Breast epithelium (tissue), 4 donors: ENCODE measurements at regions of chr5 and their contacts with region 1.

Region 1: DNA sequence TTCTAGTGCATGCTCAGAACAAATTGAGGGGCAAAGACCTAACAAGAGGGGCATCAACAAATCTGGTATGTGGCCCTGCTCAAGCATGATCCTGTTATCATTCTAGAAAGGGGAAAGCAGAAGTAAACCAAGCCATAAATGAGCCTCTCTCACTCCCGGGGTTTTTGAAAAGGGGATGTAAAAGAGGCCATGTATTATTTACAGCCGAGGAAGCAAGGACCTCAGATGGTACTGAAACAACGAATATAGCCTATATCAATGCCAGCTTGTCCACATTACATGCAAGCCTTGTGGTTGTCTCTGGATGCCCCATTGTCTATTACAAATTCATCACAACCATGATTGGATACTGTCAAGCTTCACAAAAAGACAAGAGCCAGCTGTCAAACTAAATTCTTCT is 211.3 kb downstream of the DCP2 start:
- DNase-seq: no peak
- H3K4me3 ChIP-seq: no peak overlapping the region
- H3K27ac ChIP-seq: no peak overlapping the region
- H3K4me1 ChIP-seq: no peaks in the 10 kb centered on the region
- H3K27me3 ChIP-seq: no peaks in the 10 kb centered on the region
- CTCF ChIP-seq: no peak
- POLR2A ChIP-seq: no peak

Region 2: GRCh38 chr5:113172231-113172826 is 15.6 kb before region 1 on chr5:
- intact Hi-C with region 1: loop called (anchors 1 kb)
- DNase-seq: no peak
- H3K4me3 ChIP-seq: no peak overlapping the region
- H3K27ac ChIP-seq: no peak overlapping the region
- H3K4me1 ChIP-seq: no peaks in the 10 kb centered on the region
- H3K27me3 ChIP-seq: no peaks in the 10 kb centered on the region
- CTCF ChIP-seq: no peak
- POLR2A ChIP-seq: no peak

Region 3: GRCh38 chr5:113264042-113264441 is 76.1 kb after region 1 on chr5:
- intact Hi-C with region 1: no loop called
- DNase-seq: no peak
- H3K4me3 ChIP-seq: no peak overlapping the region
- H3K27ac ChIP-seq: no peak overlapping the region
- H3K4me1 ChIP-seq: no peaks in the 10 kb centered on the region
- H3K27me3 ChIP-seq: no peaks in the 10 kb centered on the region
- CTCF ChIP-seq: no peak
- POLR2A ChIP-seq: no peak